Activated CD4-positive, alpha-beta memory T cell treated with anti-CD3 and anti-CD28 coated beads for 36 hours (primary cell): ENCODE measurements at regions of chr4 and their contacts with region 1.

Region 1: GRCh38 chr4:153083447-153083947 is 120.7 kb upstream of the TRIM2 start:
- DNase-seq: peak; percentile 59
- H3K4me3 Mint-ChIP-seq: no peak overlapping the region
- H3K27ac Mint-ChIP-seq: no peak overlapping the region
- H3K4me1 Mint-ChIP-seq: peaks cover 40% of the 10 kb centered on the region
- H3K27me3 Mint-ChIP-seq: no peaks in the 10 kb centered on the region

Region 2: DNA sequence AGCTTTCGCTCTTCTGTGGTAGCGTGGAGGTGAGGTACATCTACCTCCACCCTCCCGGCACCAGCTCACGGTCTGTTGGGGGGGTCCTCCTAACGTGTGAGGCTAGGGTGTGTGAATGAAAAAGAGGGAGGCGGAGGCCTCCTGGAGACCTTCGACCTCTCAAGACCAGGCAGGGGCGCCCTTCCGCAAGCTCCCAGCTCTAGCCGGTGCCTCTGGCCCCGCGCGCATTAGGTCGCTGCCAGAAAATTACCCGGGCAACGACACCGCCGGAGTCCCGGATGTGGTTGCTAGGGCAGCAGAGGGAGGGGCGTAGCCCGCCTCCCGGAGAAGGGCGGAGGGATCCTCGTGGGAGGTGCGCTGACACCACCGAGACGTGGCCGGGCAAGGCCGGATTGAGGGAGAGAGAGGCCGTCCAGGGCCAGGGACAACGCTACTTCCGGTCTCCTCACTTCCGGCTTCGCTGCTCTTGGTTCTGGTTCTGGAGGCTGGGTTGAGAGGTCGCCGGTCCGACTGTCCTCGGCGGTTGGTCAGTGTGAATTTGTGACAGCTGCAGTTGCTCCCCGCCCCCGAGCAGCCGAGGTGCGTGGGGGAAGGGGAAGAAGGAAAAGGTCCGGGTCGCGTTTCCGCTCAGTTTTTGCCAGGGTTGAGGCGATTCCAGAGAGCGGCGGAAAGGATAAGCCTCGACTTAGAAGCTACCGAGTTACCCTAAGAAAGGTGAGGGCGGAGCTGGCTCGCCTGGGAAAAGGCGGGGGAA is 303.8 kb before region 1 on chr4 and contains the starts of genes ARFIP1 and TIGD4:
- CTCF ChIA-PET with region 1: interaction called, 3 read pairs
- POLR2A ChIA-PET with region 1: no interaction called
- intact Hi-C with region 1: loop called (anchors 10 kb)
- DNase-seq: peak; percentile 98
- H3K4me3 Mint-ChIP-seq: peak within 1 kb of the TSS; percentile 95
- H3K27ac Mint-ChIP-seq: peak within 1 kb of the TSS; percentile 85
- H3K4me1 Mint-ChIP-seq: peaks cover 34% of the 10 kb centered on the region
- H3K27me3 Mint-ChIP-seq: peaks cover 3% of the 10 kb centered on the region
- total RNA-seq, gene ARFIP1: 9.3 to 10.5 TPM
- total RNA-seq, gene TIGD4: 0.15 to 0.31 TPM

Region 3: DNA sequence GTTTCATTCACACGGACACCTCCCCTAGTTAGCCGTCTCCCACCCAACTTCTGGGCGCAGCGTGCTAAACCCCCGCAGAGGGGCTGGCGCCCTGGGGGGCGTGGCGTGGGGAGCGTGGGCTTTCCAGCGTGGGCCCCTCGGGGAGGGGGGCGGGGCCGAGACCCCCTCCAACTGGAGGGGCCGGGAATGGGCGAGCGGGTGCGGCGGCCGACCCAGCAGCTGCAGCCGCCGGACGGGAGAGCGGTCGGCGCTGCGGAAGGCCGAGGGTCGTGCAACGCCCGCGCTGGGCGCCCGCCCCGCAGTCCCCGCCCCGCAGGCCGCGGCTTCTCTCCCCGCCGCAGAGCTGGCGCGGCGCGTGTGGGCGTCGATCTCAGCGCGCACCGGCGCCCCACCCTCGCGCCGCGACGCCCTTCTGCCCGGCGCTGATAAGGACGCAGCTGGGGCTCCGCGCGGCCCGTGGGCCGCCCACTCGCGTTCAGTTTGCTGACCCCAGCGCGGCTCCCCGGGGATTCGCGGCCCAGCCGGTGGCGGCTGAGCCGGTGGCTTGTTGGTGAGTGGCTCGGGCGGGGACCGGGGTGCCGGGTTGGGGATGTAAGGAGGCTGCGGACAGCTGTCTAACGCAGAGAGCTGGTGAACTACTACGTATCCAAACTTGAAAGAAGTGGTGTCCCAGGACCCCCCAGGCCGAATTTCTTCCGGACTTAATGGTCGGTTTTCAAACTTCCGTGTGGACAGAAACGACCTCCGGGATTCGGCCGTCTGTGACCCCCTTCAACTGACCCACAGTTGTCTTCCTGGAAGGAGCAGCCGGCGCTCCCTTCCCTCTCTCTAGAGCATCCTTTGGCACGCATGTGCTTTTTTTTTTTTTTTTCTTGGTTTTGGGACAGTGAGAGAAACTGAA is 145.9 kb before region 1 on chr4:
- CTCF ChIA-PET with region 1: interaction called, 9 read pairs
- POLR2A ChIA-PET with region 1: no interaction called
- intact Hi-C with region 1: loop called (anchors 1 kb)
- DNase-seq: peak; percentile 24
- H3K4me3 Mint-ChIP-seq: peak overlapping the region; percentile 64
- H3K27ac Mint-ChIP-seq: no peak overlapping the region
- H3K4me1 Mint-ChIP-seq: peaks cover 12% of the 10 kb centered on the region
- H3K27me3 Mint-ChIP-seq: peaks cover 51% of the 10 kb centered on the region

Region 4: DNA sequence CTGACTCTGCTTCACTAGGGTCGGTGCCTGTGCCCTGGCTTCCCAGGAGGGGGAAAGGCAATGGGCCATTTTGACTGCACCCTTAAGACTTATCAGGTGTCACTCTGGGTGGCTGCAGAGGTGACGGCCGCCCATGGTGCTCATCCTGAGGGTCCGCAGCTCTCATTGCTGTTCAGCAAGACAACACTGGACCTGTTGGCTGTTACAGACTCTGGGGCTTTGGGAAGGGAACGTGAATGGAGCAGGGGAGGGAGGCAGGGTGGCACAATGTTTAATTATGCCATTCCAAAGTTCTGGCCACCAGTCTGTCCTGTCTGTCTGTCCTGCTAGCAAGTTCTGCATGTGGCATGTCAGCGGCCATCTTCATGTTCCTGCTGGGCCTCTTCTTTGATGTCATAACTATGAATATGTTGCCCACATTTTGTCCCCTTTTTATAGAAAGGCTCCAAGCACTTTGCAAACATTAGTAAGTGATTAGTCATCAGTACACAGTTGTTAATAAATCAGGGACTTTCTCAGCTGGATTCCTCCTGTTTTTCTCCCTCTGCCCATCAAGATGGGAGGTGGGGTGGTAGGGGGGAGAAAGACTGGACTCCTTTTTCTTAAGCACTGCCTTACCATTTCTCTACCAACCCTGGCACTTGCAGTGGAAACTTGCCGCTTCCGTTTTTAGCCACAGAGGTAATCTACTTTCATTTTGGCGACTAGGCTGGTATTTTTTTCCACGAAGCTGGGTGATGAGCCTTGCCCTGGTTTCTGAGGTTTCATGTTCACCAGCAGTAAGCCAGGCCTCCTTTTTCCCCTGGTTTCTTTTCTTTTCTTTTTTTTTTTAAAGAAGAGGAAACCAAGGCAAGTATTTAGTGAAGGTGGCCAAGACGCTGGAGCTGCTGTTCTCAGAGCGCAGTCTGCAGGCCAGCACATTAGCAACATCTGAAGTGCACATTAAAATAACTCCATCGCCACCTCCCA is 32.1 kb after region 1 on chr4:
- CTCF ChIA-PET with region 1: interaction called, 500 read pairs
- POLR2A ChIA-PET with region 1: interaction called, 5 read pairs
- intact Hi-C with region 1: loop called (anchors 1 kb)
- DNase-seq: peak; percentile 89
- H3K4me3 Mint-ChIP-seq: no peak overlapping the region
- H3K27ac Mint-ChIP-seq: no peak overlapping the region
- H3K4me1 Mint-ChIP-seq: peaks cover 17% of the 10 kb centered on the region
- H3K27me3 Mint-ChIP-seq: no peaks in the 10 kb centered on the region

Region 5: DNA sequence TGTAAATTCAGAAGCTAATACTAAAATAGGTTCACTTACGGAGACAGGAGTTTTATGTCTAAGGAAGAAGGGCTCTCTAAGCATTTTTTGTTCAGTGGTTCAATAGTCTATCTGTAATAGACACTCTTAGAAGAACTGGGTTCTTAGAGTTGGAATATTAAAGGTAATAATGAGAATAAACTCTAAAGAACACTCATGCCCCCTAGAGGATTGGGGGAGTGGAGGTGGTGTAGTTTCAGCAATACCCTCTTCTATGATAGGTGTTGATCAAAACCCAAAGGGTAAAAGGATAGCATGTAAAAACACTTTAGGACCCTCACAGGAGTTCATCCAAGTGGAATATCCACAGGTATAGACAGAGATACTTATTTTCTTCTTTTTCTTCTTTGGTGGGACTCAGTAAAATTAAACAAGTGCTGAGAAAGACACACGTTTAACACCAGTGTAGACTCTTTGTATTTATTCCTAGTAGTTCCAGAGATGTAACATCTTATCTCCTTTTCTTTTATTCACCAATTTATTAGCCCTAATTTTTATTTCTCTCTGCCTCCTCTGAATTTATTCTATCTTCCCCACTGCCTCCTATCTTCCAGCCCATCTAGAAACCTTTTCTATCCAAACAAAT is 235.3 kb after region 1 on chr4:
- CTCF ChIA-PET with region 1: interaction called, 5 read pairs
- POLR2A ChIA-PET with region 1: no interaction called
- intact Hi-C with region 1: loop called (anchors 2 kb)
- DNase-seq: peak; percentile 19
- H3K4me3 Mint-ChIP-seq: no peak overlapping the region
- H3K27ac Mint-ChIP-seq: no peak overlapping the region
- H3K4me1 Mint-ChIP-seq: no peaks in the 10 kb centered on the region
- H3K27me3 Mint-ChIP-seq: no peaks in the 10 kb centered on the region

Region 6: GRCh38 chr4:155072417-155072816 is 1988.9 kb after region 1 on chr4:
- CTCF ChIA-PET with region 1: no interaction called
- POLR2A ChIA-PET with region 1: no interaction called
- intact Hi-C with region 1: no loop called
- DNase-seq: no peak
- H3K4me3 Mint-ChIP-seq: no peak overlapping the region
- H3K27ac Mint-ChIP-seq: no peak overlapping the region
- H3K4me1 Mint-ChIP-seq: no peaks in the 10 kb centered on the region
- H3K27me3 Mint-ChIP-seq: no peaks in the 10 kb centered on the region